ENCODE measurements at regions of chr16 and their contacts with region 1.

Region 1: DNA sequence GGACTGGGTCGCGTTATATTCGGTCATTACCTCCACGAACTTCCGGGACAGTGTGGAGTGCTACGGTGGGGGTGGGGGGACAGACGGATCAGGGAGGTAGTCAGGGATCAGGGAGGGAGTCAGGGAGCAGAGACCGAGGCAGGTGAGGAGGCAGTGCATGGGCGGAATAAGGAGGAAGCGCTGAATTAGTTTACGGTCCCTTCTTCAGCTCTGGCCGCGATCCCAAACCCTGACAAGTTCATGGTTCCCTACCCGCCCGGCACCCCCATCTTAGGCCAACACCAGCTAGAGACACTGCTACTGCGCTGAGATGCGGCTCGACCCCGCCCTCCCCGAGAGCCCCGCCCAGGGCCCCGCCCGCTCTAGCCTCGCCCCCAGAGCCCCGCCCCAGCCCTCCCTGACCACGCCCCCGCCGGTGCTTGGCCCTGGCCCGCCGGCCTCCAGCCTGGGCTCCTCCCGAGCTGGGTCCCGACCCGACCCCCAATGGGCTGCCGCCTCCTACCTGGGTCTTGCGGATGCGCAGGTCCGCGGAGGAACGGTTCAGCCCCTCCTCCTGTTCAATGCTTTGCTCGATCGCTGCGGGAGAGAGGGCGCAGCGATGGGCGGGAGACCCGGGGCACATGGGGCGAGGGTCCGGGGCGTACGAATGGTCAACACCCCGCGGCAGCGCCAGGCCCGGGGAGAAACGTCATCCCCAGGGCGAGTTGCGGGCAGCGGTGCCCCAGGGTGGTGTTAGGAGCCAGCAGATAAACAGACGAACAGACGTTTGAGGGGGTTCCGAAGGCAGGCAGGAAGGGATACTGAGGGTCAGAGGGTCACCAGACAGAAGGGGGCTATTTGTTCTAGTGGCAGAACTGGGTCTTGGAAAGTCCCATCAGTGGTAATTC is 12.2 kb downstream of the HSD3B7 start:
- DNase-seq: peak; percentile 96
- H3K4me3 ChIP-seq: peak overlapping the region; percentile 60 to 70 (median 64)
- H3K27ac ChIP-seq: peak overlapping the region; percentile 80 to 87 (median 83)
- H3K4me1 ChIP-seq: peaks cover 13 to 23% (median 20%) of the 10 kb centered on the region in 4 donors
- H3K27me3 ChIP-seq: peaks cover 0 to 6% (median 0%) of the 10 kb centered on the region in 4 donors
- CTCF ChIP-seq: no peak
- EP300 ChIP-seq: no peak
- POLR2A ChIP-seq: no peak

Region 2: DNA sequence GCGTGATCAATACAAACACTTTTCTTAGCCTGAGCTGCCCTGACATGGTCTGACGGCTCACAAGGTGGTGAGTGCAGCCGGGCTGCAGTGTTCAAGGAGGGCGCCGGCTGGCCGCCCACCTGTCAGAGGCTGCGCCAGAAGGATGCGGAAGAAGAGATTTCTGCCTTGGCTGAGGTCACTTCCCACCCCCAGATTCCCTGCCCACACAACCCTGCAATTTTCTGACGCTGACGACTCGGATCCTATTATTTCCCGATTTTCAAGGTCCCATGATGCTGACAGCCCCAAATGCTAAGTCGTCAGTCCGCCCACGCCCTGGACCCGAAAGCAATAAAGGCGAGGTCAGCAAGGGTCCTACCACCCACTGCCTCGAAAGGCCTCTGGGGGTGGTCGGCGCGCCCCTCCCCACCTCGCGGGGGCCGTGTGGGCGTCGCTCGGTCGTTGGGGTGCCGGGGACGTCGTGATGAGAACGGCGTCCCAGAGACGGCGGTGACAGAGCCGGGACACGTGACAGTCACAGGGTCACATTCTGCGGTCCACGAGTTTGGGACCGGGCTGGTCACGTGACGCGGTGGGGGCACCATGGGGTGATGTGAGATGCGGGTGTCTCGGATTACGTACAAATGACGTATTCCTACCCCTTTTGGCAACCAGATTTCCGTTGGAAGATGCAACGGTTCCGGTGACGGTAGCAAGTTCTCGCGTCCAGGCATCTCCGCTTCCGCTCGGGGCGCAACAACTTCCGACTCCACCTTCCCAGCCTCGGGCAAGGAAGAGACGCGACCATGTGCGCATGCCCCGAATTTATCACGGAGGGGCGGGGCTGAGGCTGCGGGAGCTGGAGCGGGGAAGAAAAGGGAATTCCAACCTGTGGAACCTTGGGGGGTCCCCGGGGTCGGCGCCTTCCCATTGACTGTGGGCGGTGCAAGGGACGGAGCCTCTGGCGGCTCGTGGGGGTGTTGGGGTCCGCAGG is 35.8 kb after region 1 on chr16 and contains the start of gene STX4:
- intact Hi-C with region 1: loop called (anchors 5 kb)
- DNase-seq: peak; percentile 99
- H3K4me3 ChIP-seq: peak within 1 kb of the TSS; percentile 76 to 94 (median 89)
- H3K27ac ChIP-seq: peak within 1 kb of the TSS; percentile 91 to 95 (median 95)
- H3K4me1 ChIP-seq: peaks cover 17 to 36% (median 31%) of the 10 kb centered on the region in 4 donors
- H3K27me3 ChIP-seq: no peaks in the 10 kb centered on the region
- CTCF ChIP-seq: peak in 1 of 3 experiments; percentile 3
- EP300 ChIP-seq: no peak
- POLR2A ChIP-seq: no peak
- total RNA-seq, gene STX4: 36.8 to 54.0 (median 41.0) TPM

Region 3: GRCh38 chr16:31179747-31180459 is 182.7 kb after region 1 on chr16 and contains the start of gene FUS:
- intact Hi-C with region 1: no loop called
- DNase-seq: peak; percentile 98
- H3K4me3 ChIP-seq: peak within 1 kb of the TSS; percentile 80 to 99 (median 88)
- H3K27ac ChIP-seq: peak within 1 kb of the TSS; percentile 95 to 99 (median 96)
- H3K4me1 ChIP-seq: peaks cover 29 to 48% (median 42%) of the 10 kb centered on the region in 4 donors
- H3K27me3 ChIP-seq: no peaks in the 10 kb centered on the region
- CTCF ChIP-seq: no peak
- EP300 ChIP-seq: no peak
- POLR2A ChIP-seq: peak; percentile 99
- total RNA-seq, gene FUS: 24.0 to 45.1 (median 34.2) TPM